ENCODE measurements at regions of chr1 and their contacts with region 1.

Region 1: GRCh38 chr1:42801832-42802473 is 15.0 kb upstream of the ERMAP start:
- DNase-seq: no peak

Region 2: DNA sequence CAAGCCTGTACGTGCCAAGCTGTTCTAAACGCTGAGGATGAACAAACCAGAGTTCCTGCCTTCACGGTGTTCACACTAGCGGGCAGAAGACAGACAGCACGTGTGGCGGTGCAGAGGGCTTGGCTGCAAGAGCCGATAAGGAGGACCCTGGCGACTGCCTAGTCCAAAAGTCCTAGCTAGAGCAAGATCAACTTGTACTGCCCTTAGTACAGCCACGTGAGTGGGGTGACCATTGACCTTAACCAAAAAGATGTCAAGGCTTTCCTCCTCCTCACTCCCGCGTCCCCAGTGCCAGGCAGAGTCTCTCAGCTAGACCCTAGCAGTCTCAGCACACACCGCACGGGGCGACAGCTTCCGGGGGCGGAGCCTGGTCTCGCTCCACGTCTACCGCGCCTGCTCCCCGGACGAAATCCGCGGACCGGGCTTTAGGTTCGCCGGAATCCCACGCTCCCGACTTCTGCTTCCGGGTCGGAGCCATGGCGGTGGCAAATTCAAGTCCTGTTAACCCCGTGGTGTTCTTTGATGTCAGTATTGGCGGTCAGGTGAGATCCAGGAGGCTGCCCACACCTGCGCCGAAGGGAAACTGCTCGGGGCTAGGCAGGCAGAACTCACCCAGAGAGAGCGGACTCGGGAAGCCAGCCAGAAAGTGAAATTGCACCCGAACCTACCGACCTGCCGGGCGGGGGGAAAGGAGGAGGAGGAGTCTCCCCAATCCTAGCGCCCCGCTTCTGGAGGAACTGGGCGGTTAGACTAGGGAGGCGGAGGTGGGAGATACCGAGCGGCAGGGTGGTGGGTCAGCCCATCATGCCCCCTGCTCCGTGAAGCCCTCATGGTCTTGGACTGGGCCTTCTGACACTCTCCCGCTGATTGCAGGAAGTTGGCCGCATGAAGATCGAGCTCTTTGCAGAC is 143.7 kb before region 1 on chr1 and contains the start of gene PPIH:
- intact Hi-C with region 1: no loop called
- DNase-seq: peak; percentile 98
- total RNA-seq, gene PPIH: 13.2 to 21.7 TPM

Region 3: GRCh38 chr1:42777852-42778251 is 24.1 kb before region 1 on chr1:
- intact Hi-C with region 1: no loop called
- DNase-seq: no peak

Region 4: DNA sequence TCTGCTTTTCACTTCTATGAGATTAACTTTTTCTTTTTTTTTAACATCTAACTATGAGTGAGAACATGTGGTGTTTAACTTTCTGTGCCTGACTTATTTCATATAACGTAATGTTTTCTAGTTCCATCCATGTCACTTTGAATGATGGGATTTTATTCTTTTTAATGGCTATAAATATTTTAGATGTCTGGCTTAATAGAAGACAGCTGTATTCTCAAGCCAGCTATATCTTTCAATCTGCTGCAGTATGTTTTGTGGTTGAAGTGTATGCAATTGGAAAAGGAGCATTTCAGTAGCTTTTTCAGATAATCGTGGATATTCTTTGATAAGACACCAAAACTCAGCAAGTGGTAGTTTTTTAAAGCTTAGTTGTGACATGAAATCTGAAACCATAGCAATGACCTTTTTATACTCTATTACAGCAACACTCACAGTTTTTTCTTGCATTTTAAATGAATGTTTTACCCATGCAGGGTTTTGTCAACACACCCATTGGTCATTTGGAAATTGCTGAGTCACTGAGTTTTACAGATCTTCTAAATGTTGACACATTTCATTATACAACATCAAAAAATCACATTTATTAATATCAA is 20.9 kb after region 1 on chr1:
- intact Hi-C with region 1: loop called in 1 of 2 experiments (anchors 1 kb)
- DNase-seq: no peak

Region 5: GRCh38 chr1:42891465-42892150 is 89.7 kb after region 1 on chr1:
- intact Hi-C with region 1: no loop called
- DNase-seq: no peak